A549 (cell line): ENCODE measurements at regions of chr2 and their contacts with region 1.

Region 1: GRCh38 chr2:85420536-85421259 is 2.2 kb downstream of the SH2D6 start:
- DNase-seq: peak; percentile 92 to 97
- ATAC-seq: peak; percentile 57 to 70
- H3K4me3 ChIP-seq: peak overlapping the region; percentile 16; the same call in 1 of the 3 replicates
- H3K27ac ChIP-seq: peak overlapping the region; percentile 96 to 98
- H3K4me1 ChIP-seq: peaks cover 44% of the 10 kb centered on the region
- CTCF ChIP-seq: peak; percentile 99
- EP300 ChIP-seq: no peak
- POLR2A ChIP-seq: no peak
- RAD21 ChIP-seq: peak; percentile 100

Region 2: GRCh38 chr2:85188852-85189587 is 231.7 kb before region 1 on chr2:
- CTCF ChIA-PET with region 1: no interaction called
- POLR2A ChIA-PET with region 1: no interaction called
- DNase-seq: no peak
- ATAC-seq: no peak; a peak in 2 of 6 replicates
- H3K4me3 ChIP-seq: no peak overlapping the region
- H3K27ac ChIP-seq: no peak overlapping the region
- H3K4me1 ChIP-seq: peaks cover 10% of the 10 kb centered on the region; the same call in 2 of the 3 replicates
- CTCF ChIP-seq: no peak
- EP300 ChIP-seq: no peak
- POLR2A ChIP-seq: no peak
- RAD21 ChIP-seq: no peak

Region 3: GRCh38 chr2:85354286-85355072 is 66.2 kb before region 1 on chr2 and contains the starts of genes ELMOD3 and RETSAT:
- CTCF ChIA-PET with region 1: interaction called, 11 read pairs
- POLR2A ChIA-PET with region 1: interaction called, 3 read pairs
- DNase-seq: peak; percentile 98 to 100
- ATAC-seq: peak; percentile 94 to 99
- H3K4me3 ChIP-seq: peak within 1 kb of the TSS; percentile 83
- H3K27ac ChIP-seq: peak within 1 kb of the TSS; percentile 85 to 91
- H3K4me1 ChIP-seq: peaks cover 15% of the 10 kb centered on the region
- CTCF ChIP-seq: no peak
- EP300 ChIP-seq: no peak
- POLR2A ChIP-seq: peak; percentile 99
- RAD21 ChIP-seq: no peak
- polyA plus RNA-seq, gene ELMOD3: 29.9 and 31.9 TPM in 2 replicates
- polyA plus RNA-seq, gene RETSAT: 51.6 and 52.3 TPM in 2 replicates

Region 4: DNA sequence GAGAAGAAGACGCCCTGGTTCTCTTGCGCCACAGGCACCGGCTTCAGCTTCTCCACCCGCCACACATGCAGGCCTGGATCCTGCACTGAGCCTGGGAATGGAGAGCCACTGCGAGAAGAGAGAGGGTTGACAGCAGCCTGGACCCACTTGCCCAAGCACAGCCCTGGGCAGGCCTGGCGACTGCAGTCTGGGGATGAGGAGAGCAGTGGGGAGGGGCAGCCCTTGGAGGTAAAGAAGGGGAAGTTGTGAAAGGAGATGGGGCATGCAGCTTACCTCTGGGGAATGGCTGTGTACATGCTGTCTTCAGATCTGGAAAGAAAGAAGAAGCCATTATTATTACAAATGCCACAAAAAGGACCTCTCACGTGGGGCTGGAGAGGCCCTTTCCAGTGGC is 18.9 kb before region 1 on chr2:
- CTCF ChIA-PET with region 1: interaction called, 13 read pairs
- POLR2A ChIA-PET with region 1: interaction called, 3 read pairs
- DNase-seq: no peak
- ATAC-seq: peak in 1 of 2 experiments; percentile 11; a peak in 2 of 6 replicates
- H3K4me3 ChIP-seq: no peak overlapping the region
- H3K27ac ChIP-seq: no peak overlapping the region
- H3K4me1 ChIP-seq: no peaks in the 10 kb centered on the region
- CTCF ChIP-seq: no peak
- EP300 ChIP-seq: no peak
- POLR2A ChIP-seq: no peak
- RAD21 ChIP-seq: no peak

Region 5: DNA sequence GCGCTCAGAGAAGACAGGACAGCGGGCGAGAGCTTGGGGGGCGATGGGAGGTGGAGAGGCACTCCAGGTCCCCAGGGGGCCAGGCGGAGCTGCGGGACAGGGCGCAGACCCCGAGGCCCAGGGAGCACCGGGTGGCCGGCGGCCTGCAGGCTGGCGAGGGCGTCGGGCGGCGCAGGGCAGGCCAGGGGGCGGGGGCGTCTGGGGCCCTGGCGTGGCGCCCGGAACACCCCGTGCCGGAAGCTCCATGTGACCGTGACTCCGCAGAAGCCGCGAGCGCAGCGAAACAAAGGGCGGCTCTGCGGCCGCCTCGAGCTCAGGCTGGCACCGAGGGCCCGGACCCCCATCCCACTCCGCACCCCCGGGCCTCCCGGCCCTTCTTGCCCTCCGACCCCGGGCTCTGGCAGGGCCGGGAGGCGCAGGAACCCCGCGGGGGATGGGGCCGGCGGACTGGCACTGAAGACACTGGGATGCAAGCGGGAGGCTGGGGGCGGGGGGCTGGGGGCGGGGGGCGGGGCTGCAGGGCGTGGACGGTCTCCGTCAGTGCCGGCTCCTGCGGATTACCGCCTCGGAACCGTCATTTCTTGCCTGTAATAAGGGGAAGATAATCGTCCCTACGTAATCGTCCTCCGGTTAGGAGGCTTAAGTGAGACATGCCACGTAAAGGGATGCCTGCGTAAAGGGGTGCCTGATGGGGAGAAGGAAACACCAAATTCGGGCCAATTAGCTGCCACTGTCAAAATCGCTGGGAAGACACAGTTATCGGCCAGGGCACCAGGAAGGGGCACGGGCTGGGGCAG is 17.0 kb after region 1 on chr2:
- CTCF ChIA-PET with region 1: interaction called, 209 read pairs
- POLR2A ChIA-PET with region 1: interaction called, 38 read pairs
- DNase-seq: peak; percentile 89
- ATAC-seq: peak; percentile 70 to 79
- H3K4me3 ChIP-seq: peak overlapping the region; percentile 33
- H3K27ac ChIP-seq: peak overlapping the region; percentile 91 to 95
- H3K4me1 ChIP-seq: peaks cover 61% of the 10 kb centered on the region
- CTCF ChIP-seq: no peak
- EP300 ChIP-seq: peak; percentile 61 to 78; a peak in 3 of 5 replicates
- POLR2A ChIP-seq: peak; percentile 40
- RAD21 ChIP-seq: peak in 1 of 2 experiments; percentile 57; a peak in 3 of 5 replicates

Region 6: DNA sequence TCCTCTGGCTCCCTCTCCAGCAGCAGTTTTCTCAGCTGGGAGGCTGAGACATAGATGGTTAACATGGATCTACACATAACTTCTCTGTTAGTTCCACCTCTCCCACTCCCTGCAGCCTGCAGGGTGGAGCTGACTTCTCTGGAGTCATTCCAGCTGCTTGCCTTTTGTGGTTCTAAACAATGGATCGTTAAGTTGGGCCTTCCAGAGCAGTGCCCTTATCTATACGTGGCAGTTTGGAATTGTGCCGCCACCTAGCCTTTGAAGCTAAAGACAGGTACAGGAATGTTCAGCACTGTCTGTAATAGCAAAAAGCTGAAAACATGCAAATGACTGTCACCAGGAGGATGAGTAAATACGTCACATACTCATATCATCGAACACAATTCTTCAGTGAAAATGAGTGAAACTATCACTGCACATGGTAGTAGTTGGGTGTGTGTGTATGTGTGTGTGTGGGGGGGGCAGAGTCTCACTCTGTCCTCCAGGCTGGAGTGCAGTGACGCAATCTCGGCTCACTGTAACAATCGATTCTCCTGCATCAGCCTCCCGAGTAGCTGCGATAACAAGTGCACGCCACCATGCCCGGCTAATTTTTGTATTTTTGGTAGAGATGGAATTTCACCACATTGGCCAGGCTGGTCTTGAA is 48.1 kb after region 1 on chr2:
- CTCF ChIA-PET with region 1: interaction called, 16 read pairs
- POLR2A ChIA-PET with region 1: interaction called, 5 read pairs
- DNase-seq: peak; percentile 69 to 82
- ATAC-seq: peak; percentile 82 to 83
- H3K4me3 ChIP-seq: no peak overlapping the region
- H3K27ac ChIP-seq: peak overlapping the region; percentile 81 to 86
- H3K4me1 ChIP-seq: peaks cover 66% of the 10 kb centered on the region
- CTCF ChIP-seq: no peak
- EP300 ChIP-seq: no peak
- POLR2A ChIP-seq: no peak
- RAD21 ChIP-seq: peak in 1 of 2 experiments; percentile 8; a peak in 2 of 5 replicates

Region 7: GRCh38 chr2:85504778-85505323 is 84.2 kb after region 1 on chr2:
- CTCF ChIA-PET with region 1: interaction called, 43 read pairs
- POLR2A ChIA-PET with region 1: interaction called, 15 read pairs
- DNase-seq: peak; percentile 59 to 75
- ATAC-seq: peak; percentile 79 to 82
- H3K4me3 ChIP-seq: no peak overlapping the region
- H3K27ac ChIP-seq: peak overlapping the region; percentile 61 to 83
- H3K4me1 ChIP-seq: peaks cover 41% of the 10 kb centered on the region
- CTCF ChIP-seq: no peak; the same call in 2 of the 3 replicates
- EP300 ChIP-seq: no peak
- POLR2A ChIP-seq: no peak
- RAD21 ChIP-seq: 0 out of 5 replicates have a peak, but pooled peaks of 1 of the 2 experiments have one; percentile 14

Region 8: DNA sequence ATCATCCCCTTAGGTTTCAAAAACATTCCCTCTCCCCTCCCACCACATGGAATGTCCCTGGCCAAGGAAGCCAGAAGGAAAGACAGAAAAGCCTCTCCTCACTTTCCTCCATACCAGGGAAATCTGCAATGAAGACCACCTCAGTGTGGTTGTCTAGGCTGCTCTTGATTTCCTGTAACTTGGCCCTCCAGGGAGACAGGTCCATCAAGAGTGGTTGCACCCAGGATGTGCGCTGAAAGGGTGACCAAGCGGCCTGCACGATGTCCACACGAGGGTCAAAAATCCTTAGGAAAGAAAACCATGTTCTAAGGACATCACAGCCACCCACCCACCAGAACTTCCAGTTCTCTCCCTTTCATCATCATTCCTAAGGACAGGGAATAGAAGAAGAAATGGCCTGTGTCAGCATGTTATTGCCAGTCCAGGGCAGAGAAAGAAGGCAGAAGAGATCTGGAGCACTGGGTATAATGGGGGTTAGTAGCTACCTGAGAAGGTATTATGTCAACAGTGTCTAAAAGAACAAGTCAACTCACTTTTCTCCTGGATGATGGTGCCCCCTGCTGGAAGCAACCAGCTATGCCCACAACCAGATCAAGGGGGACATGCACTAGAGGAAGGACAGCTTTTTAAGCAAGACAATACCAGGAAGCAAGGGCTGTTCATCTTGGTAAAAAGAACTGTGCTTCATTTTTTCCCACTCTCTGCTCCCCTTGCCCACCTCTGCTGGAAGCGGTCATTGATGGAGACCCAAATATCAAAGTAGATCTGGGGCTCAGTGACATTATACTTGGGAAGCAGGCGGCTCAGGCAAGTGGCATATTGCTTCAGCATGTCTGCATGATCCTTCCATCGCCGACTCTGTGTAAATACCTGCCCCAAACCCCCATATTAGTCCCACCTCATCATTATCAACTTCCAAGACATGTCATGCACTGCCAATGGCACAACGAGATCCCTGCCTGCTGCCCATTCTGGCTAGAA is 131.3 kb after region 1 on chr2:
- CTCF ChIA-PET with region 1: interaction called, 1,185 read pairs
- POLR2A ChIA-PET with region 1: interaction called, 116 read pairs
- DNase-seq: peak in 1 of 2 experiments; percentile 87
- ATAC-seq: peak; percentile 52 to 64
- H3K4me3 ChIP-seq: no peak overlapping the region
- H3K27ac ChIP-seq: peak overlapping the region; percentile 34 to 45; a peak in 5 of 6 replicates
- H3K4me1 ChIP-seq: peaks cover 10% of the 10 kb centered on the region
- CTCF ChIP-seq: peak; percentile 98
- EP300 ChIP-seq: no peak
- POLR2A ChIP-seq: no peak
- RAD21 ChIP-seq: peak; percentile 99 to 100